PC-3 (cell line): ENCODE measurements at regions of chr18 and their contacts with region 1.

Region 1: GRCh38 chr18:39693359-39693758 is 2127.8 kb upstream of the CELF4 start:
- DNase-seq: no peak
- ATAC-seq: no peak
- H3K4me3 ChIP-seq: no peak overlapping the region
- H3K27ac ChIP-seq: no peak overlapping the region
- H3K4me1 ChIP-seq: no peaks in the 10 kb centered on the region
- H3K27me3 ChIP-seq: no peaks in the 10 kb centered on the region
- CTCF ChIP-seq: no peak

Region 2: GRCh38 chr18:39587586-39587985 is 105.8 kb before region 1 on chr18:
- CTCF ChIA-PET with region 1: no interaction called
- POLR2A ChIA-PET with region 1: interaction called, 12 read pairs
- intact Hi-C with region 1: no loop called
- DNase-seq: no peak
- ATAC-seq: no peak
- H3K4me3 ChIP-seq: no peak overlapping the region
- H3K27ac ChIP-seq: no peak overlapping the region
- H3K4me1 ChIP-seq: no peaks in the 10 kb centered on the region
- H3K27me3 ChIP-seq: no peaks in the 10 kb centered on the region
- CTCF ChIP-seq: no peak

Region 3: GRCh38 chr18:39647627-39648534 is 45.5 kb before region 1 on chr18:
- CTCF ChIA-PET with region 1: no interaction called
- POLR2A ChIA-PET with region 1: no interaction called
- intact Hi-C with region 1: no loop called
- DNase-seq: peak; percentile 68
- ATAC-seq: peak; percentile 85
- H3K4me3 ChIP-seq: no peak overlapping the region
- H3K27ac ChIP-seq: no peak overlapping the region
- H3K4me1 ChIP-seq: no peaks in the 10 kb centered on the region
- H3K27me3 ChIP-seq: no peaks in the 10 kb centered on the region
- CTCF ChIP-seq: no peak